ENCODE measurements at regions of chr1 and their contacts with region 1.

Region 1: DNA sequence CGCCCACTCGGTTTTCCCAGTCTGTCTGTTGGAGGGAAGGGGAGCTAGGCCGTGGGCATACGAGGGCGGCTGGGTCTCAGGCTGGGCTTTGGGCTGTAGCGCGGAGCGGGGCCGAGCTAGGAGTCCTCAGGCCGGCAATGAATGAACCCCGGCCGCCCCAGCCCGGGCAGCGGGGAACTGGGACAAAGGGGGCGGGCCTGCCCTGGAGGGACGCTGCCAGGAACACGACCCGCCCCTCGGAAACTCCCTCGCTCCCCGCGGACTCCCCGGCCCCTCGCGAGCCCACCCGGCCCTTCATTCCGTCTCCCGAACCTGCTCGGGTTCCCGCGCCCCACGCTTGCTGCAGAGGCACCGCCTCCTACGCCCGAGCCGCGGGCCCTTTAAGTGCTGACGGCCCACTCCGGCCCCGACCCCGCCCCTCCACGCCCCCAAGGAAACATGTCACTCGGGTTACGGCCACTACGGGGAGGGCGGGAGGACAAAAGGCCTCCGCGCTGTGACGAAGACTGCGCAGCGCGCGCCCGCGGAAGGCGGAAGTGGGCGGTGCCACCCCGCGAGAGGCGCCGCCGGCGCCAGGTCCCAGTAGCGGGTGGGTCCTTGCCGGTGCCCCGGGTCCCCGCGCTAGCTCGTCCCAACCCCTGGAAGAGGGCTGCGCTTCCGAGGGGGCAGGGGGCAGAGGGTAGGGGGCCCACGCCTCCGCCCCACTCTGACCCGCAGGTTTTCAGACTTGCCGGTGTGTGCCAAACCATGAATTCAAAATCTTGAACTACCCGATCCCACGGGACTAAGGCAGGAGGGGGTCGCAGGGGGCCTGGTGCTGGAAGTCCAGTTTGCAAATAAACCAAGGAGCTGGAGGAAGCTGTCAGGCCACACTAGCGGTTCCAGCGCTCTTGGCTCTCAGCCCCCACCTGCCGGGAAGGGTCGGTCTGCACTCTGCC is at the start of gene GALE:
- DNase-seq: peak; percentile 98
- H3K4me3 ChIP-seq: peak within 1 kb of the TSS; percentile 69 to 93 (median 76)
- H3K27ac ChIP-seq: peak within 1 kb of the TSS; percentile 86 to 94 (median 90)
- H3K4me1 ChIP-seq: peaks cover 0 to 28% (median 20%) of the 10 kb centered on the region in 4 donors
- H3K27me3 ChIP-seq: no peaks in the 10 kb centered on the region
- CTCF ChIP-seq: no peak
- EP300 ChIP-seq: peak in 1 of 4 donors; percentile 70
- POLR2A ChIP-seq: peak; percentile 62 to 79
- total RNA-seq, gene GALE: 7.8 to 11.5 (median 9.5) TPM

Region 2: DNA sequence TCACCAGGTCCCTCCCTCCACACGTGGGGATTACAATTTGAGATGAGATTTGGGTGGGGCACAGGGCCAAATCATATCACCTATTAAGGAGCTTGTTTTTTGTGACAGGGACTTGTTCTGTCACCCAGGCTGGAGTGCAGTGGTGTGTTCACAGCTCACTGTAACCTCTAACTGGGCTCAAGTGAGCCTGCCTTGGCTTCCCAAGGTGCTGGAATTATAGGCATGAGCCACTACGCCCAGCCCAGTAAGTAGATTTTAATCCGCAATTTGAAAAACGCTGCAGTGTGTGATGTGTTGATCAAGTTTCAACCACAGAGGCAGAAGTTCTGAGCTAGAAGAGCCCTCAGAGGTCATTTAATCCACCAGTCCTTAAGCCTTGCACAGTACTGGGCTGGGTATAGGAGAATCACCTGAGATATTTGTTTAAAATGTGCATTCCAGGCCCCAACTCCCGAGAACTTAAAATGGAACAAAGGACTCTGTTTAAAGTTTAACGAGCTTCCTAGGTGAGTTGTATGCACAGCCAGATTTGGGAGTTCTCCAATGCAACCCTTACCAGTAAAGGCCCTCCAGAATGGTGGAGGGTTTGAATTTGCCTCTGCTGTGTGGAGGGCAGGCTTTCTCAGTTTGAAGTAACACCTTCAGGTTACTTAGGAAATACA is 95.7 kb before region 1 on chr1:
- intact Hi-C with region 1: no loop called
- DNase-seq: no peak
- H3K4me3 ChIP-seq: no peak overlapping the region
- H3K27ac ChIP-seq: no peak overlapping the region
- H3K4me1 ChIP-seq: no peaks in the 10 kb centered on the region
- H3K27me3 ChIP-seq: no peaks in the 10 kb centered on the region
- CTCF ChIP-seq: no peak
- EP300 ChIP-seq: no peak
- POLR2A ChIP-seq: no peak

Region 3: GRCh38 chr1:23825076-23825761 is 24.6 kb after region 1 on chr1 and contains the start of gene HMGCL:
- intact Hi-C with region 1: loop called (anchors 2 kb)
- DNase-seq: peak; percentile 95
- H3K4me3 ChIP-seq: peak within 1 kb of the TSS; percentile 61 to 97 (median 92)
- H3K27ac ChIP-seq: peak within 1 kb of the TSS; percentile 85 to 96 (median 95)
- H3K4me1 ChIP-seq: peaks cover 0 to 14% (median 9%) of the 10 kb centered on the region in 4 donors
- H3K27me3 ChIP-seq: no peaks in the 10 kb centered on the region
- CTCF ChIP-seq: no peak
- EP300 ChIP-seq: peak in 1 of 4 donors; percentile 60
- POLR2A ChIP-seq: peak; percentile 87 to 89
- total RNA-seq, gene HMGCL: 24.8 to 47.4 (median 37.9) TPM

Measured in sigmoid colon (tissue), 7 donors.